ENCODE measurements at regions of chr4 and their contacts with region 1.

Region 1: DNA sequence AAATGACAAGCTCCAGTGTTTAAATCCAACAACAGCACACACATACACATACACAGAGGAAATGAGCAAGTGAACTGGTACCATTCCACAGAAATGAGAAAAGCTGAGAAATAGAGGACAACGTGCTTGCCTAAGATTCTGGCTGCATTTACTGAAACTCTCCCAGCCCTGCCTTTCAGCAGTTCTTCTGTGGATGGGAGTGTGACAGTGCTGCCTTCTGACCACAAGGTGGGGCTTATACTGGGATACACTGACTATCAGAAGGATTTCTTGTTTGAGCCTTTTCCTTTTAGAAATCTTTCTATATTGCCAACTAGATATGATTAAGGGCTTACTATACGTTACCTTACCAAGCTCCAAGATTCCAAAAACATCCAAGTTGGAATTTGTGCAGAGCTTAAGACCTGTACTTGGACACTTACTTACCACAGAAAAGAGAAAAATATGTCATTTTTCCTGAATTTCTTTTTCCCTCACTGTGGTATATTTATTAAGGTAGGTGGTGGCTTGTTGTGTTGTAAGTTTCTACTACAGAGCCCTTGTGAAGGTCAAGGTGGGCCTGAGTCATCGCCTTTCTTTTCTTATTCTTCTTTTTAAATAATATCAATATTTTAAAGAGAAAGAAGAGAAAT is 10.7 kb upstream of the CXCL8 start:
- DNase-seq: peak; percentile 16
- H3K4me3 Mint-ChIP-seq: no peak overlapping the region
- H3K27ac Mint-ChIP-seq: no peak overlapping the region
- H3K4me1 Mint-ChIP-seq: no peaks in the 10 kb centered on the region
- H3K27me3 Mint-ChIP-seq: peaks cover 10% of the 10 kb centered on the region

Region 2: DNA sequence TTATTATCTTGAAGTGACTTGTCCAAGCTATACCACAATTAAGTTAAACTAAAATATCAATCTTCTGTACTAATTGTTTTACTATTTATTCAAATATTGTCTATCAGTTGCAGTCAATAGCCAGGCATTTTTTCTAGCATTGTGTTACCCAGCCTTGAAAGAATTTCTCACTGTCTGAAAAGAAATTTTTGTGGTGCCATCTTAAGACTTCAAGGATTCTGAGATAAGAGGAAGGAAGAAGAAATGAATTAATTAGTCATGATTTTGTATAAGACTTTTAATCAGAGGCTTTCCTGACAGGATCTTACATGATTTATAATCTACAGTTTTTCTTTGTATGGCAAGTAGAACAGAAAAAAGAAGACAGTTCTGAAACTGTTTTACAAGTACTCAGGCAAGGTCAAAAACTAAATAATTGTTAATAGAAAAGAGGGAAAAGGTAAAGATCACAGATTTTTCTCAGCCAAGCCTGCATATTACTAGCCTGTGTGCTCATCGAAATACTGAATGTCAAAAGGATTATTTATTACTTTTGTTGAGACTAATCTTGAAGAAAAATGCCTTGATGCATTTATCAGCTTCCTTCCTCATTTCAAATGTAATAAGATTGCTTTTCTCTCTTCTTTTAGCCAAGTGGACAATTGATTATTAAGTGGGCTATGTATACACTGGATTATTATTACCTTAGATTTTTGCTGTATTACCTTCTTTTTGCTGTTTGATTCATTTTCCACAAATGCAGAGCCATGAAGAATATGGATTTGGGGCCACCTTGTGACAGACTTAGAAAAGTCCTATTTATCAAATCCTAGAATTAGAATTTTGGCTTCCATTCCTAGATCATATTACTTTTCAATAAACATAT is 193.3 kb after region 1 on chr4:
- CTCF ChIA-PET with region 1: no interaction called
- intact Hi-C with region 1: loop called (anchors 1 kb)
- DNase-seq: no peak
- H3K4me3 Mint-ChIP-seq: no peak overlapping the region
- H3K27ac Mint-ChIP-seq: no peak overlapping the region
- H3K4me1 Mint-ChIP-seq: no peaks in the 10 kb centered on the region
- H3K27me3 Mint-ChIP-seq: peaks cover 3% of the 10 kb centered on the region

Region 3: DNA sequence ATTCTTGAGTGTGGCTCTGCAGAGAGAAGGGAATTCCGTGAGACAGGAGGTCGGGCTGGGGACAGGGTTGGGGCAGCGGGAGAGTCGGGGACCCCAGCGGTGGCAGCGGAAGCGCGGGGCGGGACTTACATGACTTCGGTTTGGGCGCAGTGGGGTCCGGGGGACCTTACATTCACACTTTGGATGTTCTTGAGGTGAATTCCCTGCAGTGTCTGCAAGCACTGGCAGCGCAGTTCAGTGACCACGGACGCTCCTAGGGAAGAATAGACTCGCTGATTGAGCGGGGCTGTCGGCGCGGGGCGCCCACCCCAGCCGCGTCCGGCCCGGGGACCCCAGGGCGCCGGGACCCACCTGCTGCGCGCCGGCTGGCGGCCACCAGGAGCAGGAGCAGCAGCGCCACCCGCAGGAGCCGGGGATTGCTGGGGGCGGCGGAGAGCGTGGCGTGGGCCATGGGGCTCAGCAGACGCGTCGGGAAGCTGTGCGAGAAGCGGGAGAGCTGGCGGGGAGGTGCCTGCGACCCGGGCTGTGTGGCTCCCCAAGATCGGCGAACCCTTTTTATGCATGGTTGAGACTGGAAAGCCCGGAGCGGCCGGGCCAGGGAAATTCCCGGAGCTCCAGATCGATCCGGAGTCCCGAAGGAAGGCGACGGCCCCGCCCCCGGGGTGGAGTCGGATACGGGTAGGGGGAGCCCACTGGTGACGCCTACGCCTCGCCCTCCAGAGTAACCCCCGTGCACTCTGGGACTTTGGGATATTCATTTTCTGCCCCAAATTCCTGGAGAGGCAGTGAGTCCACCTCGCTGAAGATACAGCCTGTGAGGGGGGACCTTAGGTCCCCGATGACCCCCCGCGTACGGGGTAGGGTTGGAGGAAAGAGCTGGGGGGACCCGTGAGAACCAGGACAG is 308.8 kb after region 1 on chr4 and contains the start of gene CXCL3:
- CTCF ChIA-PET with region 1: no interaction called
- intact Hi-C with region 1: loop called (anchors 10 kb)
- DNase-seq: peak; percentile 17
- H3K4me3 Mint-ChIP-seq: peak within 1 kb of the TSS; percentile 65
- H3K27ac Mint-ChIP-seq: no peak within 1 kb of the TSS
- H3K4me1 Mint-ChIP-seq: peaks cover 7% of the 10 kb centered on the region
- H3K27me3 Mint-ChIP-seq: peaks cover 45% of the 10 kb centered on the region
- total RNA-seq, gene CXCL3: not detected

Measured in activated naive CD4-positive, alpha-beta T cell treated with anti-CD3 and anti-CD28 coated beads for 36 hours (primary cell).